Activated CD8-positive, alpha-beta memory T cell treated with anti-CD3 and anti-CD28 coated beads, Interleukin-2, amount 10 ng/mL, durations not matched to agents 7 days and 5 days (primary cell): ENCODE measurements at regions of chr5 and their contacts with region 1.

Region 1: DNA sequence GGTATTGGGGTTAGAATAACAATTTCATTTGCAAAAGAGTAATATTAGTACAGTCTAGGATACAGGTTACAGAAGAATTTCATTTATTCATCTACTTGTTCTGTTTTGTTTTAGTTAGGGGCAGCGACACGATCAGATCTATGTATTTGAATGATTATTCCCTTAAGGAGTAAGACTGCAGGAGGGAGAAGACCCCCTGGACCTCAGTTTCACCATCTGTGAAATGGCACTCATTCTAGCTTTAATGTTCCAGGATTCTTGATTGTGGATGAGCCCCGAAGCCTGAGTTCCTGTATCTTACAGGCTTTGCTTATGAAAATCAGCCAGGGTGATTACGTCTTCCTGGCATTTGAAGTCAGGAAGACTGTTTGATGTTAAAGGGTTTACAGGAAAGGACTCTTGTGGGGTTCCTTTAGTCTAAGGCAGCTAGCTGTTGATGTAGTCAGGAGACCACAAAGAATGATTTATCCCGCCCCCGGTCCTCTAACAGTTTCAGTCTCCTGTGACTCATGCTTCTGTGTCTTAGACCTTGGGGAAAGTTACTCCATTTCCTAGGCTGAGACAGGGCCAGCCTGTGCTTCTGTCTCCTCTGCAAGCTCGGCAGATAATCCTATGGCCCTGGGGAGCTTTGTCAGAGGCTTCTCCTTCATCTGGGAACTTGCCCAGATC is 11.5 kb downstream of the SMIM3 start:
- DNase-seq: peak; percentile 85
- ATAC-seq: peak; percentile 100
- H3K4me3 Mint-ChIP-seq: peak overlapping the region; percentile 61
- H3K27ac Mint-ChIP-seq: peak overlapping the region; percentile 81
- H3K4me1 Mint-ChIP-seq: peaks cover 51% of the 10 kb centered on the region
- H3K27me3 Mint-ChIP-seq: no peaks in the 10 kb centered on the region

Region 2: GRCh38 chr5:150700594-150701293 is 89.3 kb before region 1 on chr5 and contains the start of gene RBM22:
- CTCF ChIA-PET with region 1: interaction called, 17 read pairs
- DNase-seq: peak; percentile 95
- ATAC-seq: peak; percentile 97
- H3K4me3 Mint-ChIP-seq: no peak within 1 kb of the TSS
- H3K27ac Mint-ChIP-seq: no peak within 1 kb of the TSS
- H3K4me1 Mint-ChIP-seq: peaks cover 7% of the 10 kb centered on the region
- H3K27me3 Mint-ChIP-seq: no peaks in the 10 kb centered on the region
- total RNA-seq, gene RBM22: 63.3 to 78.7 TPM

Region 3: GRCh38 chr5:150801117-150801927 is 11.2 kb after region 1 on chr5:
- CTCF ChIA-PET with region 1: interaction called, 40 read pairs
- DNase-seq: no peak
- ATAC-seq: peak; percentile 53
- H3K4me3 Mint-ChIP-seq: no peak overlapping the region
- H3K27ac Mint-ChIP-seq: no peak overlapping the region
- H3K4me1 Mint-ChIP-seq: peaks cover 9% of the 10 kb centered on the region
- H3K27me3 Mint-ChIP-seq: peaks cover 17% of the 10 kb centered on the region